ENCODE measurements at regions of chr11 and their contacts with region 1.

Region 1: GRCh38 chr11:119121008-119121810 is at the start of gene HINFP:
- DNase-seq: peak; percentile 99
- H3K4me3 Mint-ChIP-seq: peak within 1 kb of the TSS; percentile 98
- H3K27ac Mint-ChIP-seq: peak within 1 kb of the TSS; percentile 83
- H3K4me1 Mint-ChIP-seq: peaks cover 36% of the 10 kb centered on the region
- H3K27me3 Mint-ChIP-seq: no peaks in the 10 kb centered on the region
- total RNA-seq, gene HINFP: 31.2 and 35.2 TPM in 2 replicates

Region 2: GRCh38 chr11:118659314-118659952 is 461.8 kb before region 1 on chr11:
- intact Hi-C with region 1: no loop called
- DNase-seq: peak; percentile 74
- H3K4me3 Mint-ChIP-seq: no peak overlapping the region
- H3K27ac Mint-ChIP-seq: no peak overlapping the region
- H3K4me1 Mint-ChIP-seq: no peaks in the 10 kb centered on the region
- H3K27me3 Mint-ChIP-seq: peaks cover 9% of the 10 kb centered on the region

Region 3: GRCh38 chr11:119018074-119018938 is 102.9 kb before region 1 on chr11 and contains the starts of genes RPS25 and TRAPPC4:
- intact Hi-C with region 1: loop called (anchors 1 kb)
- DNase-seq: peak; percentile 92
- H3K4me3 Mint-ChIP-seq: peak within 1 kb of the TSS; percentile 99
- H3K27ac Mint-ChIP-seq: peak within 1 kb of the TSS; percentile 100
- H3K4me1 Mint-ChIP-seq: peaks cover 42% of the 10 kb centered on the region
- H3K27me3 Mint-ChIP-seq: no peaks in the 10 kb centered on the region
- total RNA-seq, gene RPS25: 1,440 and 1,455 TPM in 2 replicates
- total RNA-seq, gene TRAPPC4: 141 and 142 TPM in 2 replicates

Region 4: GRCh38 chr11:119084663-119085436 is 36.4 kb before region 1 on chr11 and contains the start of gene HMBS:
- intact Hi-C with region 1: loop called (anchors 1 kb)
- DNase-seq: peak; percentile 89
- H3K4me3 Mint-ChIP-seq: peak within 1 kb of the TSS; percentile 97
- H3K27ac Mint-ChIP-seq: peak within 1 kb of the TSS; percentile 92
- H3K4me1 Mint-ChIP-seq: peaks cover 39% of the 10 kb centered on the region
- H3K27me3 Mint-ChIP-seq: no peaks in the 10 kb centered on the region
- total RNA-seq, gene HMBS: 55.0 and 55.6 TPM in 2 replicates

Region 5: GRCh38 chr11:119101759-119102423 is 19.3 kb before region 1 on chr11 and contains the start of gene DPAGT1:
- intact Hi-C with region 1: loop called (anchors 1 kb)
- DNase-seq: peak; percentile 82
- H3K4me3 Mint-ChIP-seq: peak within 1 kb of the TSS; percentile 91
- H3K27ac Mint-ChIP-seq: peak within 1 kb of the TSS; percentile 95
- H3K4me1 Mint-ChIP-seq: peaks cover 44% of the 10 kb centered on the region
- H3K27me3 Mint-ChIP-seq: no peaks in the 10 kb centered on the region
- total RNA-seq, gene DPAGT1: 81.8 and 84.4 TPM in 2 replicates

Region 6: DNA sequence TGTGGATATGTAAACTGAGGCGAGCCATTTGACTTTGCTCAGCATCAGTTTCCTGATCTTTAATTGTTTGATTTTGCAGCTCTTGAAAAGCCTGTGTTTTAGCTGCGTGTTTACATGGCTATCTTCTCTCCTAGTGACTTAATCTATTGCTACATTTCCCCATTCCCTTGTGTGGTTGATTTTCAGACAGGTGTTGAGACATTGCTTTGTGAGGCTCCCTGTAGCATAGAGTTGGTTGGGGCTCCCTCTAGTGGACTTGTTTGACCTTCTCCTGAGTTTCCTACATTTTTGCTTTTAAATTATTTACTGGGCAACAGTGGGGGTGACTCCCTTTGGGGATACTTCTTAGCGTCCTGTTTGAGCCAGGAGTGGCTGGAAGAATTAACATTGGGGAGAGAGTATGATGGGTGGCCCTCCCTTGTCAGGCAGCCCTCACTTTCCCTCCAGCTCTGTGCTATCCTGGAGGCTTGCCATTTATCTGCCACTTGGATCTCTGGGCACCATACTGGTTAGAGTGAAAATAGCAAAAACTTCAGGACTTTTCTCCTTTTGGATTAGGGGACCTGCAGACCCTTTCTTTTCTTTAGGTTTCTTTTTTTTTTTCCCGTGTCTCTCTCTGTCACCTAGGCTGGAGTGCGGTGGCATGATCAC is 75.7 kb after region 1 on chr11:
- intact Hi-C with region 1: loop called (anchors 1 kb)
- DNase-seq: peak; percentile 60
- H3K4me3 Mint-ChIP-seq: no peak overlapping the region
- H3K27ac Mint-ChIP-seq: no peak overlapping the region
- H3K4me1 Mint-ChIP-seq: peaks cover 9% of the 10 kb centered on the region
- H3K27me3 Mint-ChIP-seq: peaks cover 3% of the 10 kb centered on the region

Region 7: GRCh38 chr11:119381181-119381988 is 260.2 kb after region 1 on chr11 and contains the start of gene USP2:
- intact Hi-C with region 1: loop called (anchors 1 kb)
- DNase-seq: peak; percentile 95
- H3K4me3 Mint-ChIP-seq: no peak within 1 kb of the TSS
- H3K27ac Mint-ChIP-seq: no peak within 1 kb of the TSS
- H3K4me1 Mint-ChIP-seq: no peaks in the 10 kb centered on the region
- H3K27me3 Mint-ChIP-seq: peaks cover 8% of the 10 kb centered on the region
- total RNA-seq, gene USP2: 0.22 and 0.36 TPM in 2 replicates